ENCODE measurements at regions of chr9 and their contacts with region 1.

Region 1: GRCh38 chr9:128927731-128928411 is 7.1 kb downstream of the PHYHD1 start:
- DNase-seq: peak; percentile 85
- H3K4me3 ChIP-seq: no peak overlapping the region; a peak in 1 of 4 replicates
- H3K27ac ChIP-seq: no peak overlapping the region
- H3K4me1 ChIP-seq: no peaks in the 10 kb centered on the region; a peak in 1 of 4 replicates
- H3K27me3 ChIP-seq: no peaks in the 10 kb centered on the region
- CTCF ChIP-seq: peak; percentile 91
- EP300 ChIP-seq: no peak
- RAD21 ChIP-seq: peak; percentile 89

Region 2: GRCh38 chr9:128845155-128845931 is 82.5 kb before region 1 on chr9:
- CTCF ChIA-PET with region 1: interaction called, 47 read pairs
- POLR2A ChIA-PET with region 1: no interaction called
- DNase-seq: peak; percentile 85
- H3K4me3 ChIP-seq: no peak overlapping the region
- H3K27ac ChIP-seq: peak overlapping the region in 1 of 2 experiments; percentile 74; a peak in 2 of 4 replicates
- H3K4me1 ChIP-seq: peaks cover 0 to 18% of the 10 kb centered on the region in 2 experiments; a peak in 1 of 4 replicates
- H3K27me3 ChIP-seq: no peaks in the 10 kb centered on the region
- CTCF ChIP-seq: no peak
- EP300 ChIP-seq: no peak
- RAD21 ChIP-seq: peak; percentile 21; the same call in 1 of the 2 replicates

Region 3: GRCh38 chr9:128863647-128864046 is 64.2 kb before region 1 on chr9:
- CTCF ChIA-PET with region 1: interaction called, 50 read pairs
- POLR2A ChIA-PET with region 1: no interaction called
- DNase-seq: peak; percentile 87
- H3K4me3 ChIP-seq: peak overlapping the region in 1 of 2 experiments; percentile 19; a peak in 1 of 4 replicates
- H3K27ac ChIP-seq: no peak overlapping the region
- H3K4me1 ChIP-seq: no peaks in the 10 kb centered on the region; a peak in 1 of 4 replicates
- H3K27me3 ChIP-seq: no peaks in the 10 kb centered on the region
- CTCF ChIP-seq: peak; percentile 84
- EP300 ChIP-seq: no peak
- RAD21 ChIP-seq: peak; percentile 74

Region 4: DNA sequence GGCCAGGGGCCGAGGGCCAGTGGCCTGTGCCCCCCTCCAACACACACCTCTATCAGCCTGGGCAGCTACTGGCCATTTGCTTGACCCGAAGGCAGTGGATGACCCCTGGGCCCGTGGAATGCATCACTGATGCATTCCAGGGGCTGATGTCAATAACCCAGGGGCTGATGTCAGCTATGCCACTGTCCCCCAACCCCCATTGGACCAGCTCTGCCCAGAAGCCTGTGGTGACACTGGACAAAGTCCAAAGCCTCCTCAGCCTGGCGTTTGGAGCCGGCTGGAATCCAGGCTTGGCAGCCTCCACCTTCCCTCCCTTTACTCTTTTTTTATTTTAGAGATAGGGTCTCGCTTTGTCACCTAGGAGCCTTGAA is 52.1 kb before region 1 on chr9:
- CTCF ChIA-PET with region 1: interaction called, 18 read pairs
- POLR2A ChIA-PET with region 1: no interaction called
- DNase-seq: no peak
- H3K4me3 ChIP-seq: no peak overlapping the region
- H3K27ac ChIP-seq: no peak overlapping the region
- H3K4me1 ChIP-seq: peaks cover 3 to 7% of the 10 kb centered on the region in 2 experiments; a peak in 2 of 4 replicates
- H3K27me3 ChIP-seq: no peaks in the 10 kb centered on the region
- CTCF ChIP-seq: no peak
- EP300 ChIP-seq: no peak
- RAD21 ChIP-seq: no peak

Region 5: GRCh38 chr9:128881901-128882681 is 45.8 kb before region 1 on chr9 and contains the starts of genes KYAT1 and LRRC8A:
- CTCF ChIA-PET with region 1: interaction called, 18 read pairs
- POLR2A ChIA-PET with region 1: interaction called, 4 read pairs
- DNase-seq: peak; percentile 95
- H3K4me3 ChIP-seq: peak within 1 kb of the TSS; percentile 87 to 100
- H3K27ac ChIP-seq: peak within 1 kb of the TSS; percentile 76 to 81
- H3K4me1 ChIP-seq: peaks cover 10 to 16% of the 10 kb centered on the region in 2 experiments; a peak in 2 of 4 replicates
- H3K27me3 ChIP-seq: no peaks in the 10 kb centered on the region
- CTCF ChIP-seq: no peak
- EP300 ChIP-seq: no peak
- RAD21 ChIP-seq: no peak
- polyA plus RNA-seq, gene KYAT1: 9.4 and 13.3 TPM in 2 replicates
- polyA plus RNA-seq, gene LRRC8A: 28.6 and 30.4 TPM in 2 replicates

Region 6: DNA sequence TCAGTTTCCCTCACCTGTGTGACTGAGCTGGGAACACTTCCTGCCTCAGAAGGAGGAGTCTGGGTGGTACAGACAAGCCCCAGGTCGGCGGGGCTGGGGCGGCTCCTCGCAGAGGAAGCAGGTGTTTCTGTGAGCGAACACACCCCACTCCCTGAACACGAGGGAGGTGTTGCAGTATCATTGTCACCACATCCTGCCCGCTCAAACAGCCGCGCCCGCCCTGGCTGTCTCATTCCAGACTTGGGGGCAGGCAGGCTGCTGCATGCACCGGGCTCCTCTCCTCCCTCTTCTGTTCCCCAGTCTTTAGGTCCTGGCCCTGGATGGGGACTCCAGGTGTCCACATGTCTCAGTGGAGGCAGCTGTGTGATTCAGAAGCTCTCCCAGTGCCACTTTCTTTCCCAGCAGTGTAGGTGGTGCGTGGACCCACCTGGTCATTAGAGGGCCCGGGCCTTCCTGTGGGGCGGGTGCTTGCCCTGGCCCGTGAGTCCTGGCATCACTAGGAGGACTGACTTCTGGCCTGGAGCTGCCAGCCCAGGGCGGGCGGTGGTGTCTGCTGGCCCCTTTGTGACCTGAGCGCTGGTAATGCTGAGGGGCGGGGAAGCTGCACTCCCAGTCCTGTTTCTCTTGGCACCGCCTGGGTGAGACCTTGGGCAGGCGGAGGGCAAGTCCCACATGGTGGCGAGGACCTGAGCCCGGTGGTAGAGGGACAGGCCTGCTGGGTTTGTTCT is 25.4 kb before region 1 on chr9:
- CTCF ChIA-PET with region 1: interaction called, 10 read pairs
- POLR2A ChIA-PET with region 1: no interaction called
- DNase-seq: no peak
- H3K4me3 ChIP-seq: no peak overlapping the region
- H3K27ac ChIP-seq: no peak overlapping the region; a peak in 1 of 4 replicates
- H3K4me1 ChIP-seq: peaks cover 7 to 9% of the 10 kb centered on the region in 2 experiments; a peak in 2 of 4 replicates
- H3K27me3 ChIP-seq: no peaks in the 10 kb centered on the region
- CTCF ChIP-seq: no peak
- EP300 ChIP-seq: no peak
- RAD21 ChIP-seq: no peak

Region 7: DNA sequence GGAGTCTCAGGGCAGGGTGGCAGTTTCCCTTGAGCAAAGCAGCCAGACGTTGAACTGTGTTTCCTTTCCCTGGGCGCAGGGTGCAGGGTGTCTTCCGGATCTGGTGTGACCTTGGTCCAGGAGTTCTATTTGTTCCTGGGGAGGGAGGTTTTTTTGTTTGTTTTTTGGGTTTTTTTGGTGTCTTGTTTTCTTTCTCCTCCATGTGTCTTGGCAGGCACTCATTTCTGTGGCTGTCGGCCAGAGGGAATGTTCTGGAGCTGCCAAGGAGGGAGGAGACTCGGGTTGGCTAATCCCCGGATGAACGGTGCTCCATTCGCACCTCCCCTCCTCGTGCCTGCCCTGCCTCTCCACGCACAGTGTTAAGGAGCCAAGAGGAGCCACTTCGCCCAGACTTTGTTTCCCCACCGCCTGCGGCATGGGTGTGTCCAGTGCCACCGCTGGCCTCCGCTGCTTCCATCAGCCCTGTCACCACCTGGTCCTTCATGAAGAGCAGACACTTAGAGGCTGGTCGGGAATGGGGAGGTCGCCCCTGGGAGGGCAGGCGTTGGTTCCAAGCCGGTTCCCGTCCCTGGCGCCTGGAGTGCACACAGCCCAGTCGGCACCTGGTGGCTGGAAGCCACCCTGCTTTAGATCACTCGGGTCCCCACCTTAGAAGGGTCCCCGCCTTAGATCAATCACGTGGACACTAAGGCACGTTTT is 10.6 kb before region 1 on chr9:
- CTCF ChIA-PET with region 1: interaction called, 11 read pairs
- POLR2A ChIA-PET with region 1: interaction called, 3 read pairs
- DNase-seq: no peak
- H3K4me3 ChIP-seq: no peak overlapping the region
- H3K27ac ChIP-seq: no peak overlapping the region
- H3K4me1 ChIP-seq: peaks cover 0 to 9% of the 10 kb centered on the region in 2 experiments; a peak in 2 of 4 replicates
- H3K27me3 ChIP-seq: no peaks in the 10 kb centered on the region
- CTCF ChIP-seq: no peak
- EP300 ChIP-seq: no peak
- RAD21 ChIP-seq: no peak

Region 8: GRCh38 chr9:129058965-129059795 is 131.3 kb after region 1 on chr9:
- CTCF ChIA-PET with region 1: no interaction called
- POLR2A ChIA-PET with region 1: no interaction called
- DNase-seq: no peak
- H3K4me3 ChIP-seq: no peak overlapping the region
- H3K27ac ChIP-seq: no peak overlapping the region
- H3K4me1 ChIP-seq: no peaks in the 10 kb centered on the region
- H3K27me3 ChIP-seq: no peaks in the 10 kb centered on the region
- CTCF ChIP-seq: no peak
- EP300 ChIP-seq: no peak
- RAD21 ChIP-seq: no peak

Measured in SK-N-SH (cell line).